HCT116 (cell line): ENCODE measurements at regions of chr3 and their contacts with region 1.

Region 1: GRCh38 chr3:42780892-42781700 is 8.0 kb upstream of the CCDC13 start:
- DNase-seq: peak; percentile 54
- ATAC-seq: peak; percentile 88
- H3K4me3 ChIP-seq: no peak overlapping the region
- H3K27ac ChIP-seq: no peak overlapping the region
- H3K4me1 ChIP-seq: no peaks in the 10 kb centered on the region
- H3K27me3 ChIP-seq: no peaks in the 10 kb centered on the region
- CTCF ChIP-seq: peak; percentile 71 to 78 (median 73); a peak in 5 of 6 replicates
- POLR2A ChIP-seq: no peak
- RAD21 ChIP-seq: peak; percentile 74

Region 2: GRCh38 chr3:42839616-42840015 is 58.5 kb after region 1 on chr3:
- CTCF ChIA-PET with region 1: no interaction called
- POLR2A ChIA-PET with region 1: no interaction called
- RAD21 ChIA-PET with region 1: no interaction called
- intact Hi-C with region 1: loop called (anchors 2 kb)
- DNase-seq: peak; percentile 63
- ATAC-seq: peak; percentile 99
- H3K4me3 ChIP-seq: no peak overlapping the region
- H3K27ac ChIP-seq: no peak overlapping the region
- H3K4me1 ChIP-seq: no peaks in the 10 kb centered on the region
- H3K27me3 ChIP-seq: no peaks in the 10 kb centered on the region
- CTCF ChIP-seq: peak; percentile 55 to 75 (median 69); a peak in 5 of 6 replicates
- POLR2A ChIP-seq: no peak
- RAD21 ChIP-seq: peak; percentile 74

Region 3: GRCh38 chr3:42880601-42881451 is 99.7 kb after region 1 on chr3:
- CTCF ChIA-PET with region 1: no interaction called
- POLR2A ChIA-PET with region 1: no interaction called
- RAD21 ChIA-PET with region 1: no interaction called
- intact Hi-C with region 1: loop called (anchors 1 kb)
- DNase-seq: peak; percentile 55
- ATAC-seq: peak; percentile 99
- H3K4me3 ChIP-seq: peak overlapping the region; percentile 42 to 53
- H3K27ac ChIP-seq: peak overlapping the region; percentile 30; the same call in 1 of the 2 replicates
- H3K4me1 ChIP-seq: peaks cover 0 to 13% of the 10 kb centered on the region in 2 experiments; a peak in 3 of 4 replicates
- H3K27me3 ChIP-seq: no peaks in the 10 kb centered on the region
- CTCF ChIP-seq: peak; percentile 74 to 86 (median 82)
- POLR2A ChIP-seq: no peak
- RAD21 ChIP-seq: peak; percentile 94